ENCODE measurements at regions of chr10 and their contacts with region 1.

Region 1: GRCh38 chr10:92517034-92517655 is 56.7 kb downstream of the IDE start:
- DNase-seq: peak; percentile 64
- H3K4me3 ChIP-seq: no peak overlapping the region
- H3K27ac ChIP-seq: no peak overlapping the region
- H3K4me1 ChIP-seq: no peaks in the 10 kb centered on the region
- H3K27me3 ChIP-seq: no peaks in the 10 kb centered on the region
- CTCF ChIP-seq: peak; percentile 73 to 82 (median 75)
- EP300 ChIP-seq: no peak
- POLR2A ChIP-seq: no peak

Region 2: DNA sequence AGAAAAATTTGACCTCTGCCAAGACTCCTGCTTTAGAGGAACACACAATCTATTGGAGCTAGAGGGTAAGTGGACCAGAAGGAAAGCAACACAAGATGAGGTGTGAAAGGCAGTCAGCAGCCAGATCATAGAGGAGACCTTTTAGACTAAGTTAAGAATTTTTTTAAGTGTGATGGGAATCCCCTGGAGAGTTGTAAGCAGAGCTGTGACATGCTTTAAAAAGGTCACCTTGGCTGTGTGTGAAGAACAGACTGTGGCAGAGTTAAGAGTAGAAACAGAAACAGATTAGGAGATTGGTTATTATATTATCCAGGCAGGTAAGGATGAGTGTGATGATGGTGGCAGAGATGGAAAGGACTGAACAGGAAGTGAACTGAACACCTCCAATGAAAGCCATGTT is 249.8 kb before region 1 on chr10:
- in situ Hi-C with region 1: no loop called
- intact Hi-C with region 1: no loop called
- DNase-seq: no peak
- H3K4me3 ChIP-seq: no peak overlapping the region
- H3K27ac ChIP-seq: peak overlapping the region in 1 of 4 donors; percentile 9
- H3K4me1 ChIP-seq: peaks cover 0 to 9% (median 2%) of the 10 kb centered on the region in 4 donors
- H3K27me3 ChIP-seq: no peaks in the 10 kb centered on the region
- CTCF ChIP-seq: no peak
- EP300 ChIP-seq: no peak
- POLR2A ChIP-seq: no peak

Region 3: GRCh38 chr10:92573798-92574547 is 56.8 kb after region 1 on chr10 and contains the start of gene IDE:
- in situ Hi-C with region 1: loop called in 3 of 4 experiments (anchors 5 to 10 kb)
- intact Hi-C with region 1: loop called (anchors 2 kb)
- DNase-seq: peak; percentile 92
- H3K4me3 ChIP-seq: peak within 1 kb of the TSS; percentile 65 to 97 (median 76)
- H3K27ac ChIP-seq: peak within 1 kb of the TSS; percentile 92 to 96 (median 94)
- H3K4me1 ChIP-seq: peaks cover 5 to 42% (median 14%) of the 10 kb centered on the region in 4 donors
- H3K27me3 ChIP-seq: no peaks in the 10 kb centered on the region
- CTCF ChIP-seq: peak; percentile 78 to 90 (median 82)
- EP300 ChIP-seq: no peak
- POLR2A ChIP-seq: peak; percentile 62
- total RNA-seq, gene IDE: 22.1 to 32.9 (median 24.4) TPM

Region 4: DNA sequence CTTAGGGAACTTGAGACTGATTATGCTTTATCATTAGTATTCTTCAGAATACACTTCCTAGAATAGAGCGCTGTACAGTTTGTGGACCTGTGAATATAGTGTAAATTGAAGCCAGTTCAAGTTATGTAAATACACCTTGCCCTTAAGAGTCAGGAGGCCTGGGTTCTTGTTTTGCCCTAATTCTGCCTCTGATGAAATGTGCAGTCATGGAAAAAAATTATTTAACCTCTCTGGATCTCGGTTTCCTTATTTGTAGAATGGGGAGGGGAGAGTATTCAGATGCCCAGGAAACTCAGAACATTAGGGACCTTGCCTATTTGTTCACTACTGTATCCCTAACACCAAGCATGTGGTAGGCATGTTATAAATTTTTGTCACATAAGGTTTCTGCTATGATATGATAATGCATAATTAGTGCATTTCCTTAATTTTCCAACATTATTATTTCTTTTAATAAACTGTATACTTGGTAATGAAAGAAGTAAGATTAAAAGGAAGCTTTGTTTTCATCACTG is 332.5 kb after region 1 on chr10:
- in situ Hi-C with region 1: loop called in 1 of 4 experiments (anchors 25 kb)
- intact Hi-C with region 1: no loop called
- DNase-seq: no peak
- H3K4me3 ChIP-seq: peak overlapping the region in 1 of 4 donors; percentile 91
- H3K27ac ChIP-seq: peak overlapping the region in 1 of 4 donors; percentile 89
- H3K4me1 ChIP-seq: peaks cover 5 to 19% (median 11%) of the 10 kb centered on the region in 4 donors
- H3K27me3 ChIP-seq: no peaks in the 10 kb centered on the region
- CTCF ChIP-seq: no peak
- EP300 ChIP-seq: no peak
- POLR2A ChIP-seq: no peak

Region 5: GRCh38 chr10:92880233-92880861 is 363.2 kb after region 1 on chr10:
- in situ Hi-C with region 1: no loop called
- intact Hi-C with region 1: loop called (anchors 10 kb)
- DNase-seq: no peak
- H3K4me3 ChIP-seq: no peak overlapping the region
- H3K27ac ChIP-seq: no peak overlapping the region
- H3K4me1 ChIP-seq: no peaks in the 10 kb centered on the region
- H3K27me3 ChIP-seq: no peaks in the 10 kb centered on the region
- CTCF ChIP-seq: peak in 4 of 5 experiments; percentile 37 to 41 (median 38)
- EP300 ChIP-seq: no peak
- POLR2A ChIP-seq: no peak

Measured in transverse colon (tissue), 4 donors.